ENCODE measurements at regions of chr1 and their contacts with region 1.

Region 1: DNA sequence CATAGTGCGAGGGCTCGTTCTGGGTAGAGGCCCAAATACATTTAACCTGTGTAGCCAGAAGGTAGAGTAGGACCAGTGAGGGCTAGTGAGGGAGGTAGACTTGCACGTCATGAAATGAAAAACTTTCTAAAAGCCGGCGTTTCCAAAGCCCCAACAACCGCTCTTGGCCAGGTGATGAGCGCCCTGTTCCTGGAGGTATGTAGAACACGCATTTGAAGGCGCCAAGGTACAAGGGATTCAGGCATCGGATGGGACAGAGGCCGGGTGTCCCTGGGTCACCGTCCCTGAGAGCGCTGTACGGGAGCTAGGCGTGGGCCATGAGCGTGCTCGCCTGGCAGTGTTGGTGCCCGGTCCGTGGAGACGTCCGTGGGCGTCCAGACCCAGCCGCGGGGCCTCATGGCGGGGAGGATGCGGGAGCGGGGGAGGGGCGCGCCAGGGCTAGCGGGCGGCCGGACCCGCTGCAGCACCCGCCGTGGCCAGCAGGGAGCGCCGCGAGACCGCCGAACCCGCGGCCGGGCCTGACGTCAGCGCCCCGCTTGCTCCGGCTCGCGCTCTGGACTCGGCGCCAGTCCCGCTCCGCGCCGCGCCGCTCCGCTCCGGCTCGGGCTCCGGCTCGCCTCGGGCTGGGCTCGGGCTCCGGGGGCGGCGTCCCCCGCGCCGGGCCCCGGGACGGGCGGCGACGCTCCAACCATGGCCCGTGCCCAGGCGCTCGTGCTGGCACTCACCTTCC is at the start of gene PTPRU:
- DNase-seq: peak; percentile 89
- ATAC-seq: peak; percentile 70
- total RNA-seq, gene PTPRU: 83.9 TPM

Region 2: GRCh38 chr1:30707412-30708360 is 1471.6 kb after region 1 on chr1:
- intact Hi-C with region 1: loop called (anchors 5 kb)
- DNase-seq: peak; percentile 86
- ATAC-seq: peak; percentile 84